K562 (cell line): ENCODE measurements at regions of chr21 and their contacts with region 1.

Region 1: DNA sequence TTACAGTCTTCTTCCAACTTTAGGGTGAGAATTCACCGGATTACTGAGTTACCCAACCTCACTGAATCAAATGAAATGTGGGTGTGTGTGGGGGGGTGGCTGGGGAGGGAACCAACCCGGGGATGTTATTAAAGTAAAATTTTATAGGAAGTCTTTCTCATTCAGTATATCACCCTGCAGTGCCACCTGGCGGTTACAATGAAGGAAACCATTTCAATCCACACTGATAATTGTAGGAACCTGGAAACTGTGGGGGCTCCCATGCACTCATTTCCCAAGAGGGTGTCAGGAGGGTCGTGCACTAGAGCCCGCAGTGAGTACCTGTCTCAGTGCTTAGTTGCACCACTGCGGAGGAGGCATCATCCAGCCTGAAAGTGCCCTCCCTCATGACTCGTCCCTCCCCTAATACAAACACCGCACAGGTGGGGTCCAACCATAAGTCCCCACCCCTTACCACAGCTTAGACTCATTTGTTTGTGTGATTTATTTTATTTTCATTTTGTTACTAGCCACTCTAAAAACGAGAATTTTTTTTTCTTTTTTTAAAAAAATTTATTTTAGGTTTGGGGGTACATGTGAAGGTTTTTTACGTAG is 29.1 kb upstream of the IGSF5 start:
- DNase-seq: peak; percentile 62 to 68 (median 66)
- ATAC-seq: peak; percentile 86
- H3K4me3 ChIP-seq: no peak overlapping the region
- H3K27ac ChIP-seq: no peak overlapping the region
- H3K4me1 ChIP-seq: no peaks in the 10 kb centered on the region
- H3K27me3 ChIP-seq: peaks cover 0 to 9% of the 10 kb centered on the region in 2 experiments; a peak in 1 of 5 replicates
- CTCF ChIP-seq: peak; percentile 61 to 73 (median 62); a peak in 4 of 6 replicates
- EP300 ChIP-seq: no peak
- POLR2A ChIP-seq: no peak
- RAD21 ChIP-seq: peak; percentile 51 to 70; a peak in 3 of 4 replicates

Region 2: DNA sequence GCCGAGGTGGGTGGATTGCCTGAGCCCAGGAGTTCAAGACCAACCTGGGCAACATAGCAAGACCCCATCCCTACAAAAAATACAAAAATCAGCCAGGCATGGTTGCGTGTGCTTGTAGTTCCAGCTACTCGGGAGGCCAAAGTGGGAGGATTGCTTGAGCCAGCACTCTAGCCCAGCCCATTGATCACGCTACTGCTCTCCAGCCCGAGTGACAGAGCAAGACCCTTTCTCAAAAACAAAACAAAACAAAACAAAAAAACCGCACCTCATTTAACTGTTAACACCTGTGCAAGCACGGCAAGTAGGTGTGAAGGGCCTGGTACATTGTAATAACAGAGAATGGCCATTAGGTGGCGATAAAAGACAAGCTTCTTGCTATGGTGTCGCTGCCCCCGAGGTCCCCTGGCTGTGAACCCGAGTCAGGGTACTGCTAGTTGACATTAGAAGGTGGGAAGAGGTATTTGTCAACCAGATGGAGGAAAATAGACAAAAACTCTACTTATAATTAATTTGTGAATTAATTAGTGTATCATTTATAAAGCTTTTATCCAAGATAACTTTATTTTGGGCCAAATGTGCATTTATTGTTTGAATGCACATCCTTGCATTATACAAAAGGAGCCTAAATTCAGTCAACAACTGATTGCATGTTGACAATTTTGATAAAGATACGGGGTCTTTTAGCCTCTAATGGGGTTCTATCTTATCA is 197.6 kb before region 1 on chr21:
- CTCF ChIA-PET with region 1: interaction called, 18 read pairs
- POLR2A ChIA-PET with region 1: no interaction called
- in situ Hi-C with region 1: no loop called
- intact Hi-C with region 1: loop called (anchors 1 kb)
- DNase-seq: peak; percentile 82 to 90 (median 90)
- ATAC-seq: peak; percentile 97
- H3K4me3 ChIP-seq: no peak overlapping the region
- H3K27ac ChIP-seq: no peak overlapping the region
- H3K4me1 ChIP-seq: no peaks in the 10 kb centered on the region
- H3K27me3 ChIP-seq: peaks cover 4 to 11% of the 10 kb centered on the region in 2 experiments; a peak in 1 of 5 replicates
- CTCF ChIP-seq: peak; percentile 96 to 99 (median 98)
- EP300 ChIP-seq: no peak
- POLR2A ChIP-seq: no peak
- RAD21 ChIP-seq: peak; percentile 78 to 88

Region 3: GRCh38 chr21:39660191-39660980 is 55.5 kb before region 1 on chr21:
- CTCF ChIA-PET with region 1: no interaction called
- POLR2A ChIA-PET with region 1: no interaction called
- in situ Hi-C with region 1: no loop called
- intact Hi-C with region 1: no loop called
- DNase-seq: peak in 1 of 4 experiments; percentile 21
- ATAC-seq: peak; percentile 39; the same call in 2 of the 3 replicates
- H3K4me3 ChIP-seq: no peak overlapping the region
- H3K27ac ChIP-seq: no peak overlapping the region
- H3K4me1 ChIP-seq: no peaks in the 10 kb centered on the region
- H3K27me3 ChIP-seq: peaks cover 13 to 52% of the 10 kb centered on the region in 2 experiments; a peak in 4 of 5 replicates
- CTCF ChIP-seq: no peak
- EP300 ChIP-seq: no peak
- POLR2A ChIP-seq: no peak
- RAD21 ChIP-seq: no peak